CD8-positive, alpha-beta T cell (primary cell): ENCODE measurements at regions of chr6 and their contacts with region 1.

Region 1: GRCh38 chr6:166775180-166776081 is 148.4 kb upstream of the RPS6KA2 start:
- DNase-seq: peak; percentile 16 to 85 (median 64)
- ATAC-seq: peak; percentile 77
- H3K4me3 ChIP-seq: no peak overlapping the region
- H3K4me3 Mint-ChIP-seq: no peak overlapping the region
- H3K27ac ChIP-seq: no peak overlapping the region
- H3K27ac Mint-ChIP-seq: no peak overlapping the region
- H3K4me1 ChIP-seq: peaks cover 5% of the 10 kb centered on the region
- H3K4me1 Mint-ChIP-seq: no peaks in the 10 kb centered on the region
- H3K27me3 ChIP-seq: peaks cover 0 to 3% of the 10 kb centered on the region in 2 experiments
- H3K27me3 Mint-ChIP-seq: peaks cover 17% of the 10 kb centered on the region
- CTCF ChIP-seq: peak; percentile 68

Region 2: DNA sequence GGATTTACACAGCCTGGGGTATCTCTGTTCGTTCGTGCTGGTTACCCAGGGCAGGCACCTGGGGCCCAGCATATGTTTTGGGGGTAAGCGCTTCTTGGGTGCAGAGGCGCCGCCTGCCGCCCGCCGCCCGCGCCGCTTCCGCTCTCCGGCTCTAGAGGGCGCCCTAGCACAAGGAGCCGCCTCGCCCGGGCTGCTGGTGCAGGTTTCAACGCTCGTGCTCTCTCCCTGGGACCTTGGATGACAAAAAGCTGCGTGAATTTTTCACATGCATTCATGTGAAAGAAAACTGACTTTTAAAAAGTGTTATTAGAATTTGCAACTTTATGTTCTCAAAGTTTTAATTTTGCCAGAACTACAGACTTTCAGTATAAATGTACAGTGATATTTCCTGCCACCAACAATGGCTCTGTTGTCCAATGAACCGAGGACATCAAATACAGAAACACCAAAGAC is 499.7 kb before region 1 on chr6:
- CTCF ChIA-PET with region 1: interaction called, 3 read pairs
- POLR2A ChIA-PET with region 1: no interaction called
- intact Hi-C with region 1: loop called in 1 of 2 experiments (anchors 5 kb)
- DNase-seq: peak; percentile 74 to 90 (median 82)
- ATAC-seq: peak; percentile 97
- H3K4me3 ChIP-seq: no peak overlapping the region
- H3K4me3 Mint-ChIP-seq: no peak overlapping the region
- H3K27ac ChIP-seq: no peak overlapping the region
- H3K27ac Mint-ChIP-seq: no peak overlapping the region
- H3K4me1 ChIP-seq: peaks cover 4% of the 10 kb centered on the region
- H3K4me1 Mint-ChIP-seq: peaks cover 6% of the 10 kb centered on the region
- H3K27me3 ChIP-seq: peaks cover 0 to 3% of the 10 kb centered on the region in 2 experiments
- H3K27me3 Mint-ChIP-seq: peaks cover 2% of the 10 kb centered on the region
- CTCF ChIP-seq: peak; percentile 100

Region 3: DNA sequence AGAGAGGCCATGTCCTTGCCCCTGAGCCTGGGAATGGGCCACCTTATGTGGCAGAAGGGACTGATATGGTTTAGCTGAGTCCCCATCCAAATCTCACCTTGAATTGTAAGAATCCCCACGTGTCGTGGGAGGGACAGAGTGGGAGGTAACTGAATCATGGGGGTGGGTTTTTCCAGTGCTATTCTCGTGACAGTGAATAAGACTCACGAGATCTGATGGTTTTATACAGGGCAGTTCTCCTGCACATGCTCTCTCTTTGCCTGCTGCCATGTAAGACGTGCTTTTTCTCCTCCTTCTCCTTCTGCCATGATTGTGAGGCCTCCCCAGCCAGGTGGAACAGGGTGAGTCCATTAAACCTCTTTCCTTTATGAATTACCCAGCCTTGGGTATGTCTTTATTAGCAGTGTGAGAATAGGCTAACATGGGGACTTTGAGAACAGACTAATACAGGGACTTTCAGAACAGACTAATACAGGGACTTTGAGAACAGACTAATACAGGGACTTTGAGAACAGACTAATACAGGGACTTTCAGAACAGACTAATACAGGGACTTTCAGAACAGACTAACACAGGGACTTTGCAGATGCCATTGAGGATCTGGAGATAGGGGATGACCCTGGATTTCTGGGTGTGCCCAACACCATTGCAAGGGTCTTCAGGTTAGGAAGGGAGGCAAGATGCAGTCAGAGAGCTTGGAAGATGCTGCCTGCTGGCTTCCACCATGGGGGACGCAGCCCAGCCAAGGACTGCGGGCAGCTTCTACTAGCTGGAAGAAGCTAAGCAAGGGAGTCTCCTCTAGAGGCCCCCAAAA is 275.9 kb before region 1 on chr6:
- CTCF ChIA-PET with region 1: no interaction called
- POLR2A ChIA-PET with region 1: no interaction called
- intact Hi-C with region 1: no loop called
- DNase-seq: no peak
- ATAC-seq: no peak
- H3K4me3 ChIP-seq: no peak overlapping the region
- H3K4me3 Mint-ChIP-seq: no peak overlapping the region
- H3K27ac ChIP-seq: no peak overlapping the region
- H3K27ac Mint-ChIP-seq: no peak overlapping the region
- H3K4me1 ChIP-seq: no peaks in the 10 kb centered on the region
- H3K4me1 Mint-ChIP-seq: peaks cover 6% of the 10 kb centered on the region
- H3K27me3 ChIP-seq: no peaks in the 10 kb centered on the region
- H3K27me3 Mint-ChIP-seq: no peaks in the 10 kb centered on the region
- CTCF ChIP-seq: no peak

Region 4: DNA sequence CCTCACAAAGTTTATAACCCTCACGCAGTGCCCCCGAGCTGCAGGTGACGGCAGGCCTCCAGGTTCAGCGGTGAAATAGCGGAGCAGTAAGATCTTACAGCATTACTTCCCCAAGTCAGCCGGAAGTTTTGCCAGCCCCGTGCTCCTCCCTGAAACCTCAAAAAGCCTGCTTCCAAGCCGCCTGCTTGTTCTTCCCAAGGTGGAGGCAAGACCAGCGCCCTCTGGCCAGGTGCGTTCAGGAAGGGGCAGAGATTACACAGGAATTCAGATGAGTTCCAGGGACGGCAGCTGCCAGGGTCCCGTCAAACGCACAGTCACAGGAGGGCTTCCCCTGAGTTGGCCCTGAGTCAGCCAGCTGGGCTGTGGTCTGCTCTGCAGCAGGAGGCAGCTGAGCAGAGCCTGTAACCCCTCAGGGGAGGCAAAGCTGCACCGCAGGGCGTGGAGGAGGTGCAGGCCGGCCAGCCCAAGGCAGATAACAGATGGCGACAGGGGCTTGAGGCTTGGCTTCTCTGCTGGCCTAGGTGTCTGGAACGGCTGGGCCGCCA is 24.3 kb before region 1 on chr6:
- CTCF ChIA-PET with region 1: interaction called, 18 read pairs
- POLR2A ChIA-PET with region 1: no interaction called
- intact Hi-C with region 1: no loop called
- DNase-seq: peak in 2 of 9 experiments; percentile 21 to 34
- ATAC-seq: no peak
- H3K4me3 ChIP-seq: peak overlapping the region in 1 of 2 experiments; percentile 10
- H3K4me3 Mint-ChIP-seq: peak overlapping the region; percentile 62
- H3K27ac ChIP-seq: no peak overlapping the region
- H3K27ac Mint-ChIP-seq: no peak overlapping the region
- H3K4me1 ChIP-seq: peaks cover 10% of the 10 kb centered on the region
- H3K4me1 Mint-ChIP-seq: peaks cover 14% of the 10 kb centered on the region
- H3K27me3 ChIP-seq: no peaks in the 10 kb centered on the region
- H3K27me3 Mint-ChIP-seq: peaks cover 17% of the 10 kb centered on the region
- CTCF ChIP-seq: no peak

Region 5: DNA sequence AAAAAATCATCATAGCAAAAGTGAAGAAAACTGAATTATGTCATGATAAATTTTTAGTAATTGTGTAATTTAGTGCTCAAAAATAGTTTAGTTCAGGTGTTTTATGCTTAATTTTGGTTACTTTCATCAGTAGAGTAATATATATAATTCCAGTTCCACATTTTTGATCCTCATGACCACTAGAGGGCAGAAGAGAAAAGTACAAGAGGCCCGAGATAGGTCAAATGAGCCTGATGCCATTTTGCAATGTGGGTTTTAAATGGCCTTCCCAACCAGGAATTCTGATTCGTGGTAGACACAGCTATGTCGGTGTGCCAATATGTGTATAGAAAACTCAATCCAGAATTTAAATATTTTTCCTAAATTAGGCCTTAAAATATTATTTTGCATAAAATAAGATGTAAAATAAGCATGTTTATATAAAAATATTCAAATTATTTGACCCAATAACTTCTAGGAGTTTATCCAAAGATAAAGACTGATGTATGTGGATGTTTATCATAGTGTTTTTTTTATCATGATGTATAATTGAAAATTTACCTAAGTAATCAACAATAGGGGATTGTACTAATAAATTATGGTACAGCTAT is 11.4 kb after region 1 on chr6:
- CTCF ChIA-PET with region 1: interaction called, 19 read pairs
- POLR2A ChIA-PET with region 1: no interaction called
- intact Hi-C with region 1: no loop called
- DNase-seq: peak in 5 of 9 experiments; percentile 20 to 75 (median 48)
- ATAC-seq: peak; percentile 48
- H3K4me3 ChIP-seq: no peak overlapping the region
- H3K4me3 Mint-ChIP-seq: no peak overlapping the region
- H3K27ac ChIP-seq: no peak overlapping the region
- H3K27ac Mint-ChIP-seq: no peak overlapping the region
- H3K4me1 ChIP-seq: no peaks in the 10 kb centered on the region
- H3K4me1 Mint-ChIP-seq: no peaks in the 10 kb centered on the region
- H3K27me3 ChIP-seq: no peaks in the 10 kb centered on the region
- H3K27me3 Mint-ChIP-seq: peaks cover 3% of the 10 kb centered on the region
- CTCF ChIP-seq: peak; percentile 88

Region 6: GRCh38 chr6:166989427-166990032 is 214.1 kb after region 1 on chr6:
- CTCF ChIA-PET with region 1: interaction called, 74 read pairs
- POLR2A ChIA-PET with region 1: no interaction called
- intact Hi-C with region 1: loop called in 1 of 2 experiments (anchors 1 kb)
- DNase-seq: peak in 7 of 9 experiments; percentile 43 to 72 (median 59)
- ATAC-seq: peak; percentile 82
- H3K4me3 ChIP-seq: no peak overlapping the region
- H3K4me3 Mint-ChIP-seq: no peak overlapping the region
- H3K27ac ChIP-seq: no peak overlapping the region
- H3K27ac Mint-ChIP-seq: no peak overlapping the region
- H3K4me1 ChIP-seq: peaks cover 5% of the 10 kb centered on the region
- H3K4me1 Mint-ChIP-seq: peaks cover 16% of the 10 kb centered on the region
- H3K27me3 ChIP-seq: no peaks in the 10 kb centered on the region
- H3K27me3 Mint-ChIP-seq: no peaks in the 10 kb centered on the region
- CTCF ChIP-seq: peak; percentile 66

Region 7: GRCh38 chr6:167141667-167142432 is 366.4 kb after region 1 on chr6:
- CTCF ChIA-PET with region 1: interaction called, 33 read pairs
- POLR2A ChIA-PET with region 1: no interaction called
- intact Hi-C with region 1: loop called in 1 of 2 experiments (anchors 1 kb)
- DNase-seq: peak in 7 of 9 experiments; percentile 7 to 66 (median 41)
- ATAC-seq: peak; percentile 71
- H3K4me3 ChIP-seq: no peak overlapping the region
- H3K4me3 Mint-ChIP-seq: no peak overlapping the region
- H3K27ac ChIP-seq: no peak overlapping the region
- H3K27ac Mint-ChIP-seq: no peak overlapping the region
- H3K4me1 ChIP-seq: no peaks in the 10 kb centered on the region
- H3K4me1 Mint-ChIP-seq: peaks cover 16% of the 10 kb centered on the region
- H3K27me3 ChIP-seq: no peaks in the 10 kb centered on the region
- H3K27me3 Mint-ChIP-seq: peaks cover 8% of the 10 kb centered on the region
- CTCF ChIP-seq: peak; percentile 72

Region 8: DNA sequence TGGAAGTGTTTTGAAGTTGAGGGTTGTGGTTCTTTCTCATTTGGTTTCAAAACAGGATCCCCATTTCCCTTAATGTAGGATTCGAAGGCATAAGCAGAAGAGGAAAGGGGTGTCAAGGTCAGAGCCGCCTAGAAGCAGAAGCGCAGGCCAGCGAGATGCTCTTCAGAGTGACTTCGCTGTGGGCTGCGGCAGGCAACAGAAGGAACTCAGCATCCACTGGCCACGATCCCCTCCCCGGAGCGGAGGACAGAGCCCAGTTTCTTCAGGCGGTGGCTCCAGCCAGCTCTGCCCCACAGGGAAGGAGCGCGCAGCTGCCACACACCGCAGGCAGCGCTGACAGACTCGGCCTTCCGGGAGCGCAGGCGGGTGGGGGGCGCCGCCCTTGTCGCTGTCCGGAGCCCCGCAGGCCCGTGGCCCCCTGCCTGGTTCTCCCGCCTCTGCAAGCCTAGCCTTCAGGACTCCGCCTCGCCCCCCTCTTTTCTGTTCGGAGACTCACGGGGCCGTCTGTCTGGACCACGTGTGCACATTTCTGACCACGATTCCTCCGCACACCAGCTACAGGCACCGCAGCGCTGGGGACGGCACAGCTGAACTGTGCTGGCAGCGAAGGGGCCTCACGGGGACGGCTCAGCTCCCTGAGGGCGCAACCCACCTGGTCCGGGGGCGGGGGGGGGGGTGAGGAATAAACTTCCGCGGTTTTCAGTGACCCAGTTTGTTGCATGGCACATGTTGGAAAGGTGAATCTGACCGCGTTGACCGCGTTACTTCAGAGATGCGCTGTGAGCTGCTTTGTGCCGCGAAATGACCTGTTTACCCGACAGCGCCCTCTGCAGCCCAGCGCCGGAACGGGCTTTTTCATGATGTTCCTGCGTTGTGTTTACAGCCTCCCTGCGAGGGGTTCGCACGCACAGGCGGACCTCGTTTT is 575.6 kb after region 1 on chr6:
- CTCF ChIA-PET with region 1: no interaction called
- POLR2A ChIA-PET with region 1: no interaction called
- intact Hi-C with region 1: loop called in 1 of 2 experiments (anchors 10 kb)
- DNase-seq: peak; percentile 66 to 90 (median 79)
- ATAC-seq: peak; percentile 78
- H3K4me3 ChIP-seq: peak overlapping the region; percentile 58 to 62
- H3K4me3 Mint-ChIP-seq: peak overlapping the region; percentile 89
- H3K27ac ChIP-seq: no peak overlapping the region
- H3K27ac Mint-ChIP-seq: peak overlapping the region; percentile 46
- H3K4me1 ChIP-seq: peaks cover 10% of the 10 kb centered on the region
- H3K4me1 Mint-ChIP-seq: peaks cover 12% of the 10 kb centered on the region
- H3K27me3 ChIP-seq: peaks cover 0 to 3% of the 10 kb centered on the region in 2 experiments
- H3K27me3 Mint-ChIP-seq: peaks cover 7% of the 10 kb centered on the region
- CTCF ChIP-seq: peak; percentile 86